Natural killer cell (primary cell): ENCODE measurements at regions of chrX and their contacts with region 1.

Region 1: GRCh38 chrX:71181910-71182799 is 37.5 kb downstream of the NLGN3 start:
- DNase-seq: peak; percentile 69 to 92
- ATAC-seq: peak; percentile 90 to 96 (median 91)
- H3K4me3 ChIP-seq: peak overlapping the region; percentile 75
- H3K4me3 Mint-ChIP-seq: peak overlapping the region; percentile 93
- H3K27ac ChIP-seq: peak overlapping the region; percentile 88
- H3K27ac Mint-ChIP-seq: peak overlapping the region; percentile 94 to 95
- H3K4me1 ChIP-seq: peaks cover 19% of the 10 kb centered on the region
- H3K4me1 Mint-ChIP-seq: peaks cover 0 to 7% of the 10 kb centered on the region in 2 donors
- H3K27me3 ChIP-seq: no peaks in the 10 kb centered on the region
- H3K27me3 Mint-ChIP-seq: no peaks in the 10 kb centered on the region
- CTCF ChIP-seq: no peak

Region 2: GRCh38 chrX:70769659-70770232 is 412.4 kb before region 1 on chrX:
- intact Hi-C with region 1: loop called (anchors 1 kb)
- DNase-seq: peak in 1 of 2 donors; percentile 16
- ATAC-seq: no peak
- H3K4me3 ChIP-seq: no peak overlapping the region
- H3K4me3 Mint-ChIP-seq: no peak overlapping the region
- H3K27ac ChIP-seq: no peak overlapping the region
- H3K27ac Mint-ChIP-seq: no peak overlapping the region
- H3K4me1 ChIP-seq: no peaks in the 10 kb centered on the region
- H3K4me1 Mint-ChIP-seq: no peaks in the 10 kb centered on the region
- H3K27me3 ChIP-seq: no peaks in the 10 kb centered on the region
- H3K27me3 Mint-ChIP-seq: peaks cover 7 to 53% of the 10 kb centered on the region in 2 donors
- CTCF ChIP-seq: peak; percentile 42

Region 3: GRCh38 chrX:70970482-70970995 is 211.6 kb before region 1 on chrX:
- intact Hi-C with region 1: loop called (anchors 1 kb)
- DNase-seq: peak in 1 of 2 donors; percentile 31
- ATAC-seq: no peak
- H3K4me3 ChIP-seq: no peak overlapping the region
- H3K4me3 Mint-ChIP-seq: no peak overlapping the region
- H3K27ac ChIP-seq: no peak overlapping the region
- H3K27ac Mint-ChIP-seq: no peak overlapping the region
- H3K4me1 ChIP-seq: no peaks in the 10 kb centered on the region
- H3K4me1 Mint-ChIP-seq: peaks cover 0 to 8% of the 10 kb centered on the region in 2 donors
- H3K27me3 ChIP-seq: no peaks in the 10 kb centered on the region
- H3K27me3 Mint-ChIP-seq: peaks cover 4 to 33% of the 10 kb centered on the region in 2 donors
- CTCF ChIP-seq: peak; percentile 27

Region 4: GRCh38 chrX:71195964-71196649 is 14.0 kb after region 1 on chrX:
- intact Hi-C with region 1: loop called (anchors 2 kb)
- DNase-seq: peak in 1 of 2 donors; percentile 56
- ATAC-seq: peak; percentile 80 to 84 (median 82)
- H3K4me3 ChIP-seq: peak overlapping the region; percentile 42
- H3K4me3 Mint-ChIP-seq: peak overlapping the region; percentile 85
- H3K27ac ChIP-seq: peak overlapping the region; percentile 80
- H3K27ac Mint-ChIP-seq: peak overlapping the region; percentile 90 to 98
- H3K4me1 ChIP-seq: peaks cover 19% of the 10 kb centered on the region
- H3K4me1 Mint-ChIP-seq: peaks cover 22 to 30% of the 10 kb centered on the region in 2 donors
- H3K27me3 ChIP-seq: no peaks in the 10 kb centered on the region
- H3K27me3 Mint-ChIP-seq: no peaks in the 10 kb centered on the region
- CTCF ChIP-seq: no peak